Dorsolateral prefrontal cortex (tissue), 120 donors: ENCODE measurements at regions of chr7 and their contacts with region 1.

Region 1: DNA sequence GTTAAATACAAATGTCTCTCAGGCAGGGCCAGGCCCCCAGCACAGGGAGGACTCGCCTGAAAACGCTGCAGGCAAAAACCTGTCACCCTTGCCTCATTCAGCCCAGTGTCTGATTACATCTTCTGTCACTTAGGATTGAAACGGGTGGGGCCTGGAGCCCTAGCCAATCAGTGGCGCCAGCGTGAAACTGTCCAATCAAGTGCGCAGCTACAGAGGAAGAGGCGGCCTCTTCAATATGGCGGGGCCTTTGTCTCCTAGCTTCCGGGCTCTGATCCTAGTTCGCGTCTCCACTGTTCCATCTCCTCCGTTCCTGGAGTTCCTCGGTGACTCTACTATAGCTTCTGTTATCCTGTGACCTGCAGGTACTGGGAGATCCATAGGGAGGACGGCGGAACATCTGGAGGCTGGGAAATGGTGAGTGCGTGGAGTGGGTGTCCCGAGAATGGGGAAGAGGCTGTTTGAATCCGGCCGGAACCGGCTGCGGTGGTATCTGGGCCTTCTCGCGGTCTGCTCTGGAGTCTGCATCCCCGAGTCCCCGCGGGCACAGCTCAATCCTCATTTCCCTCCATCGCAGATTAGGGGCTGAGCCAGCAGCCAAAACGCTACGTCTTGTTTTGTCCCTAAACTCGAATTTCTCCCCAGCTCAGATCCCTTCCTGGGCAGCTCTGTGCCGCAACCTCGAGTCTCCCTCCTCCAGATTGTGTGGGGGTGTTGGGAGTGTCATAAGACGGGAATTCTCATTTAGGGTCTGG is at the start of gene ZNF736:
- DNase-seq: peak; percentile 86 to 97 (median 95)
- H3K4me3 ChIP-seq: peak within 1 kb of the TSS; percentile 51 to 97 (median 85)
- H3K27ac ChIP-seq: peak within 1 kb of the TSS in 58 of 59 donors; percentile 2 to 91 (median 75)
- H3K27me3 ChIP-seq: no peaks in the 10 kb centered on the region
- CTCF ChIP-seq: peak in 4 of 56 donors; percentile 7 to 32 (median 19)
- total RNA-seq, gene ZNF736: 24.4 to 54.4 (median 35.1) TPM

Region 2: DNA sequence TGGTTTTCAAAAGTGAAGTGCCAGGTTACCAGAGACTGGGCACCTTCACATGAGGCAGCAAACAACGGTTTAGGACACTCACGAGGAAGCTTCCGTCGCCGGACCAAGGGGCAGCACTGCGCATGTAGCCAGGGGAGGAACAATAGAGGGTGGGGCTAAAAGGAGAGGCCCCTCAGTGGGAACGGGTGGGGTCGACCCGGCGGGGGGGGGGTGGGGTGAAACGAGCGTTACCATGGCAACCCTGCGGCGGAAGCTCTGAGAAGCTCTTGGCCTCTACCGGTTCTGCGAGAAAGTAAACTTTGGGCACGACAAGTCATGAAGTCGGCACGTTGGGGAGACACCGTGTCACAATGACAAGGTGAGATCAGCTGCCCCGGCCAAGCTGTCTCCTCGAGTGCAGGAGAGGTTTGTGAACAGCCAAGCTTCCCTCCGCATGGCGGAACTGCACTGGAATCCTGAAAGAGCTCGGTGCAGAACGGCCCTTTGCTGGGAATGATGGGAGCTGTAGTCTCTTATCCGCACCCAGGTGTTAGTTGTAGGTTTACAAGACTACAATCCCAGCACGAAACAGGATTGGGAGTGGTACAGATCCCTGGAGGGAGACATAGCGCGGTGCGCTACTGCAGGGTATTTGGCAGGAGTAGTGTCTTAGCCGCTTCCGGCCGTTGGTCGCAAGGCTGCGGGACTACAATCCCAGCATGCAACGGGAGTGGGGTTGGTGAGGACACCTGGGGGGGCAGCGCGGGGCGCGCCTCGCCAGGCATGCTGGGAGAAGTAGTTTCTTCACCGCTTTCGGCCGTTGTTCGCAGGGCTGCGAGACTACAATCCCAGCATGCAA is 388.1 kb before region 1 on chr7:
- intact Hi-C with region 1: loop called in 1 of 2 experiments (anchors 10 kb)
- DNase-seq: peak; percentile 63 to 97 (median 94)
- H3K4me3 ChIP-seq: peak overlapping the region; percentile 24 to 93 (median 71)
- H3K27ac ChIP-seq: peak overlapping the region in 58 of 59 donors; percentile 53 to 99 (median 92)
- H3K27me3 ChIP-seq: peaks cover 0 to 8% (median 0%) of the 10 kb centered on the region in 45 donors
- CTCF ChIP-seq: peak in 8 of 56 donors; percentile 5 to 35 (median 16)

Region 3: DNA sequence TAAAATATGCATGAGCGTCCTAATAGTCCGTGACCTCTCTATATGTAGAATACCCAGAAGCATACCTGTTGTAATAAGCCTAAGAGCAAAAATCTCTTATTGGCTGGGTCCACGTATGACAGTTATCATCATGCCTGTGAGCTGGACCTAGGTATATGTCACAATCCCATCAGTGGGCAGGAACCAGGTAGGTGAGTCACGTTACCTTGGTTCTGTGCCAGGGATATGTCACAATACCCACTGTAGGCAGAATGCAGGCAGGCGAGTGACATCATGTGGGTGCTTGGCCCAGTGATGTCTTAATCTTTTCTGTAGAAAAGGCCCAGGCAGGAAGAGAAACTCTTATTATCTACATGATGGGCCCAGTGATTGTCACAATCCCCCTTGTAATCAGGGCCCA is 13.3 kb before region 1 on chr7:
- intact Hi-C with region 1: no loop called
- DNase-seq: no peak
- H3K4me3 ChIP-seq: no peak overlapping the region
- H3K27ac ChIP-seq: no peak overlapping the region
- H3K27me3 ChIP-seq: no peaks in the 10 kb centered on the region
- CTCF ChIP-seq: no peak

Region 4: GRCh38 chr7:64562626-64563275 is 248.8 kb after region 1 on chr7 and contains the start of gene ZNF680:
- intact Hi-C with region 1: loop called (anchors 5 to 10 kb)
- DNase-seq: peak; percentile 92 to 98 (median 98)
- H3K4me3 ChIP-seq: peak within 1 kb of the TSS; percentile 70 to 98 (median 87)
- H3K27ac ChIP-seq: peak within 1 kb of the TSS; percentile 51 to 94 (median 86)
- H3K27me3 ChIP-seq: no peaks in the 10 kb centered on the region
- CTCF ChIP-seq: peak in 19 of 56 donors; percentile 2 to 41 (median 23)
- total RNA-seq, gene ZNF680: 31.2 to 76.7 (median 49.4) TPM

Region 5: GRCh38 chr7:64887756-64888508 is 574.0 kb after region 1 on chr7:
- intact Hi-C with region 1: loop called in 1 of 2 experiments (anchors 10 kb)
- DNase-seq: peak in 5 of 10 donors; percentile 20 to 69 (median 44)
- H3K4me3 ChIP-seq: peak overlapping the region; percentile 35 to 74 (median 58)
- H3K27ac ChIP-seq: peak overlapping the region in 26 of 59 donors; percentile 1 to 92 (median 73)
- H3K27me3 ChIP-seq: peaks cover 0 to 4% (median 0%) of the 10 kb centered on the region in 45 donors
- CTCF ChIP-seq: peak in 49 of 56 donors; percentile 22 to 64 (median 44)